Cardiac septum (tissue), 1 donor: ENCODE measurements at regions of chr6 and their contacts with region 1.

Region 1: GRCh38 chr6:43608310-43608763 is 20.7 kb downstream of the GTPBP2 start:
- DNase-seq: no peak

Region 2: GRCh38 chr6:43559328-43559727 is 49.0 kb before region 1 on chr6:
- intact Hi-C with region 1: no loop called
- DNase-seq: no peak

Region 3: GRCh38 chr6:44084231-44085014 is 476.1 kb after region 1 on chr6:
- intact Hi-C with region 1: loop called (anchors 5 kb)
- DNase-seq: no peak